Naive thymus-derived CD4-positive, alpha-beta T cell (primary cell): ENCODE measurements at regions of chr3 and their contacts with region 1.

Region 1: DNA sequence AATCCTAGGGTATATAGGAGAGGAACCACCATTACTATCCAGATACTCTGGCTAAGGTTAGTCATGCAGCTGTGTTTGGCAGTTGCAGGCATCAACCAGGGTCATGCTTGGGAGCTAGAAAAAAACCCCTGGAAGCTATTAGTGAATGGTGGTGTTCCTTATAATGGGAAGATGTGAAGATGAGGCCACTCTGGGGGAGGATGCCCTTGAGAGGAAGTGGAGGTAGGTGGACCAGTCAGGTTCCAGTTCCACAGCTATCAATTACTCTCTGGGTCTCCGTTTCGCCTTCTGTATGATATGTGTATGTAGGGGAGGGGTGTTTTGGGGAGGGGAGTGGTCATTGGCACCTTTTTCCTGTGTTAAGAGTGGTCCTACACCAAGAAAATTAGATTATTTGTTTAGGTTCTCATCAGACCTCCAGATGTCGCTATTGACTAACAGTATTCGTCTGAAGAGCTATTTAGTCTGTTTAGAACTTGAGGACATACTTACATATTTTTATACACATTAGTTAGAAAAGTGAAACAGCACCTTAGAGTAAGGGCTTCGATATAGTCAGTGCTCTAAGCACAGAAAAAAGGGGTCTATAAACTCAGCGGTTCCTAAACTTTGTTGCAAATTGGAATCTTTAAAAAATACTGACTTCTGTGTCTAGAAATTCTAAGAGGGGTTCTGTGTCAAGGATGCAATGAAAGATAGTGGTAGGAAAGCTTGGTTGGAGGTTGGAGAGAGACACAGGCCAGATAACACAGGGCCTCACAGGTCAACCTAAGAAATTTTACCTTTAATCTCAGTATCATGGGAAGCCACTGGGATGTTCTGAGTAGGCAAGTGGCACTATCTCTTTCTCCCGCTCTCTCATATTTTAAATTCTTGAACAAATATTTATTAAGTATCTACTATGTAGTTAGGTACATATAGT is 9.1 kb upstream of the HPS3 start:
- DNase-seq: peak in 7 of 9 donors; percentile 37 to 60 (median 49)
- ATAC-seq: peak; percentile 90
- H3K4me3 ChIP-seq: no peak overlapping the region
- H3K4me3 Mint-ChIP-seq: no peak overlapping the region
- H3K27ac ChIP-seq: no peak overlapping the region
- H3K27ac Mint-ChIP-seq: peak overlapping the region in 2 of 9 donors; percentile 3 to 74
- H3K4me1 ChIP-seq: no peaks in the 10 kb centered on the region
- H3K4me1 Mint-ChIP-seq: peaks cover 0 to 7% (median 0%) of the 10 kb centered on the region in 7 donors
- H3K27me3 ChIP-seq: no peaks in the 10 kb centered on the region
- H3K27me3 Mint-ChIP-seq: peaks cover 0 to 12% (median 8%) of the 10 kb centered on the region in 5 donors

Region 2: GRCh38 chr3:148955544-148956346 is 164.6 kb before region 1 on chr3:
- CTCF ChIA-PET with region 1: interaction called, 11 read pairs
- POLR2A ChIA-PET with region 1: no interaction called
- intact Hi-C with region 1: loop called (anchors 1 kb)
- DNase-seq: peak in 4 of 9 donors; percentile 13 to 41 (median 32)
- ATAC-seq: peak; percentile 41
- H3K4me3 ChIP-seq: no peak overlapping the region
- H3K4me3 Mint-ChIP-seq: no peak overlapping the region
- H3K27ac ChIP-seq: no peak overlapping the region
- H3K27ac Mint-ChIP-seq: no peak overlapping the region
- H3K4me1 ChIP-seq: no peaks in the 10 kb centered on the region
- H3K4me1 Mint-ChIP-seq: peaks cover 0 to 13% (median 6%) of the 10 kb centered on the region in 7 donors
- H3K27me3 ChIP-seq: no peaks in the 10 kb centered on the region
- H3K27me3 Mint-ChIP-seq: peaks cover 0 to 17% (median 0%) of the 10 kb centered on the region in 5 donors

Region 3: GRCh38 chr3:149280671-149281349 is 160.5 kb after region 1 on chr3:
- CTCF ChIA-PET with region 1: interaction called, 77 read pairs
- POLR2A ChIA-PET with region 1: no interaction called
- intact Hi-C with region 1: no loop called
- DNase-seq: no peak
- ATAC-seq: no peak
- H3K4me3 ChIP-seq: no peak overlapping the region
- H3K4me3 Mint-ChIP-seq: no peak overlapping the region
- H3K27ac ChIP-seq: no peak overlapping the region
- H3K27ac Mint-ChIP-seq: no peak overlapping the region
- H3K4me1 ChIP-seq: peaks cover 4 to 13% of the 10 kb centered on the region in 2 donors
- H3K4me1 Mint-ChIP-seq: peaks cover 6 to 17% (median 13%) of the 10 kb centered on the region in 7 donors
- H3K27me3 ChIP-seq: no peaks in the 10 kb centered on the region
- H3K27me3 Mint-ChIP-seq: no peaks in the 10 kb centered on the region

Region 4: GRCh38 chr3:149480325-149481017 is 360.2 kb after region 1 on chr3:
- CTCF ChIA-PET with region 1: no interaction called
- POLR2A ChIA-PET with region 1: no interaction called
- intact Hi-C with region 1: loop called (anchors 2 to 5 kb)
- DNase-seq: peak in 1 of 9 donors; percentile 28
- ATAC-seq: peak; percentile 73
- H3K4me3 ChIP-seq: no peak overlapping the region
- H3K4me3 Mint-ChIP-seq: no peak overlapping the region
- H3K27ac ChIP-seq: no peak overlapping the region
- H3K27ac Mint-ChIP-seq: no peak overlapping the region
- H3K4me1 ChIP-seq: no peaks in the 10 kb centered on the region
- H3K4me1 Mint-ChIP-seq: no peaks in the 10 kb centered on the region
- H3K27me3 ChIP-seq: no peaks in the 10 kb centered on the region
- H3K27me3 Mint-ChIP-seq: peaks cover 0 to 23% (median 8%) of the 10 kb centered on the region in 5 donors

Region 5: GRCh38 chr3:149771652-149772271 is 651.5 kb after region 1 on chr3:
- CTCF ChIA-PET with region 1: interaction called, 3 read pairs
- POLR2A ChIA-PET with region 1: no interaction called
- intact Hi-C with region 1: loop called in 1 of 2 experiments (anchors 1 kb)
- DNase-seq: peak in 5 of 9 donors; percentile 1 to 30 (median 13)
- ATAC-seq: no peak
- H3K4me3 ChIP-seq: no peak overlapping the region
- H3K4me3 Mint-ChIP-seq: no peak overlapping the region
- H3K27ac ChIP-seq: no peak overlapping the region
- H3K27ac Mint-ChIP-seq: no peak overlapping the region
- H3K4me1 ChIP-seq: no peaks in the 10 kb centered on the region
- H3K4me1 Mint-ChIP-seq: no peaks in the 10 kb centered on the region
- H3K27me3 ChIP-seq: no peaks in the 10 kb centered on the region
- H3K27me3 Mint-ChIP-seq: peaks cover 6 to 17% (median 11%) of the 10 kb centered on the region in 5 donors